Activated CD4-positive, alpha-beta T cell treated with anti-CD3 and anti-CD28 coated beads for 36 hours (primary cell): ENCODE measurements at regions of chr2 and their contacts with region 1.

Region 1: DNA sequence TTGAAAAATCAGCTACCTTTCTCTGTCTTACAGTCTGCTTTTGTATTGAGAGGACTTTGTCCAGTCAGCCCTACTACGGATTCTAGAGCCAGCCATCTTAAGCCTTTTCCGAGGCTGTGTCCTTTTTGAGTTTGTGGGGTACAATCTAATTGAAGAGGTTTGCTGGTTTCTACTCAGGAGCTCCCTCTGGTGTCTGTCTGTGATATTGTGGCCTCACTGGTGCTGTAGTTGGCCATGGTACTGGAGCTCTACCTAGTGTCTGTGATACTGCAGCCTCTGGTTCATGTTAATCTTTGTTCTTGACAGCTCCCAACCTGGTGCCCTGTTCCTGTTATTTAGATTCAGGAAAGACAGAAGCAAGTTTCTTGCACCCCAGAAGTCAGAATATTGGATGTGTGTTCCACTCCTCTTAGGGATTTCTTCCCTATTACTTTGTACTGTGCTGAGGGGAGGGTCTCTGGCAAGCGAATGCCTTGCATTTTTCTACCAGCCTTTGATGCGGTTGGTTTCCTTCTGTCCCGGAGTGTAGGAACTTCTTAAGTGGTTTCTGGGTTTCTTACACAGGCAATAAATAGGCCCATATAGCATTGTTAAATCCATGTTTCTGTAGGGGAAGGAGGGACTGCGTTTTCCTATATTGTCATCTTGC is 78.5 kb downstream of the ACSL3 start:
- DNase-seq: peak; percentile 78
- ATAC-seq: peak; percentile 91
- H3K4me3 Mint-ChIP-seq: no peak overlapping the region
- H3K27ac Mint-ChIP-seq: no peak overlapping the region
- H3K4me1 Mint-ChIP-seq: peaks cover 15% of the 10 kb centered on the region
- H3K27me3 Mint-ChIP-seq: no peaks in the 10 kb centered on the region

Region 2: GRCh38 chr2:222690564-222691200 is 248.7 kb before region 1 on chr2:
- CTCF ChIA-PET with region 1: interaction called, 19 read pairs
- POLR2A ChIA-PET with region 1: no interaction called
- intact Hi-C with region 1: loop called in 1 of 2 experiments (anchors 1 kb)
- DNase-seq: peak; percentile 88
- ATAC-seq: peak; percentile 96
- H3K4me3 Mint-ChIP-seq: no peak overlapping the region
- H3K27ac Mint-ChIP-seq: no peak overlapping the region
- H3K4me1 Mint-ChIP-seq: peaks cover 8% of the 10 kb centered on the region
- H3K27me3 Mint-ChIP-seq: no peaks in the 10 kb centered on the region

Region 3: DNA sequence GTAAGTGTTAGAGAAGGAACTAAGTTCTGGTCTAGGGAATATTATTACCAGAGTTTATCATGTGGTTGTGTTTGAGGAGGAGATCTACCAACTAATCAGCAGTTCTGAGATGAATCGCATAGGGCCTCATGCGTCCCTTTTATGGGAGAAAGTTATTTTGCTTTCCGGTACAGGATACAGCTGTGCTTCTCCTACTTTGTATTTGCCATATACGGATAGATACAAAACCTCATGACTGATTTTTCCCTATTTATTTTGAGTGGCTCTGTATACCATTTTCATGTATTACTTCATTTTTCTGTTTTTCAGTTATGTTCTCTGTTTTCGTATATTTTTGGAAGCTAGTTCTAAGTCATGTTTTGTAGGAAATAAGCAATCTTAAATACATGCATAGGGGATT is 11.7 kb before region 1 on chr2:
- CTCF ChIA-PET with region 1: interaction called, 14 read pairs
- POLR2A ChIA-PET with region 1: interaction called, 3 read pairs
- intact Hi-C with region 1: no loop called
- DNase-seq: no peak
- ATAC-seq: no peak
- H3K4me3 Mint-ChIP-seq: no peak overlapping the region
- H3K27ac Mint-ChIP-seq: peak overlapping the region; percentile 21
- H3K4me1 Mint-ChIP-seq: no peaks in the 10 kb centered on the region
- H3K27me3 Mint-ChIP-seq: no peaks in the 10 kb centered on the region